H1 (cell line): ENCODE measurements at regions of chr4 and their contacts with region 1.

Region 1: DNA sequence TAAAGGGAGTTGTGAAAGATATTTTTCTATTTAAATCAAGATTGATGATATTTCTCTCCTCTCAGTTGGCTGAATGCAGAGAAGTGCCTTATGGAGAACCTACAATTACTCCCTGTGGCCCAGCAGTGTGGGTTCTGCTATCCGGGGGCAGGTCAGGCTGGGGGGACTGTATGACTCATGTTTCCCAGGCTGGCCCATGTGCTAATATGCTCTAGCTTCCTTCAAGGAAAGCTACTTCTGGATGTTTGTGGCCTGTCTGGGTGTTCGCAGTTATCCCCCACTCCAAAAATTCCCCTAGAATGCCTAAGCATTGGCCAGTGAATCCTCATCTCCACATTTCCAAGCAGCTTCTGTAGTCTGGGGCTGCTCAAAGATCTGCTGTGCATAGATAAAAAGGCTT is 58.9 kb upstream of the SPP1 start:
- DNase-seq: no peak
- H3K4me3 ChIP-seq: no peak overlapping the region
- H3K27ac ChIP-seq: no peak overlapping the region
- H3K4me1 ChIP-seq: peaks cover 18 to 43% (median 32%) of the 10 kb centered on the region in 4 experiments
- H3K27me3 ChIP-seq: no peaks in the 10 kb centered on the region
- CTCF ChIP-seq: no peak
- EP300 ChIP-seq: no peak
- POLR2A ChIP-seq: no peak
- RAD21 ChIP-seq: no peak

Region 2: GRCh38 chr4:87855559-87855958 is 61.1 kb before region 1 on chr4:
- CTCF ChIA-PET with region 1: interaction called, 6 read pairs
- POLR2A ChIA-PET with region 1: interaction called, 18 read pairs
- DNase-seq: no peak
- H3K4me3 ChIP-seq: no peak overlapping the region
- H3K27ac ChIP-seq: no peak overlapping the region
- H3K4me1 ChIP-seq: peaks cover 0 to 13% (median 5%) of the 10 kb centered on the region in 4 experiments; a peak in 5 of 7 replicates
- H3K27me3 ChIP-seq: no peaks in the 10 kb centered on the region
- CTCF ChIP-seq: no peak
- EP300 ChIP-seq: no peak
- POLR2A ChIP-seq: no peak
- RAD21 ChIP-seq: no peak

Region 3: DNA sequence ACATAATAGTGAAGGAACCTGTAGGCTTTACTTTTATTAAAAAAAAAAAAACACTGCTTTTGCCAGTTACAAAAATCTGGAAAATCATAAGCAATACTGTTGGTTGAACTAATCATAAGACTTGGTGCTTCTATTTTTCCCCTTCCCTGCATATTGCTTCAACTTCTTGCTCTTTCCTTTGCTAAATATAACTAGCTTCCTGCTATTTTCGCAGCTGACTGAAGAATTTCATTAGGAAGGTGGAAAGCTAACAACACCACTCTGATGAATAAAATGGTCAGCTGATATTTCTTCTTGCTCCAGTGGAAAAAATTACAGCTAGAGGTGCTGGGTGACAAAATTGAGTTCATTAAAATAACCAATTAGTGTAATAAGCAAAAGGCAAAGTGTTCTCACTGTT is 44.6 kb before region 1 on chr4:
- CTCF ChIA-PET with region 1: interaction called, 3 read pairs
- POLR2A ChIA-PET with region 1: interaction called, 101 read pairs
- DNase-seq: no peak
- H3K4me3 ChIP-seq: no peak overlapping the region
- H3K27ac ChIP-seq: no peak overlapping the region
- H3K4me1 ChIP-seq: peaks cover 0 to 6% (median 3%) of the 10 kb centered on the region in 4 experiments; a peak in 2 of 7 replicates
- H3K27me3 ChIP-seq: no peaks in the 10 kb centered on the region
- CTCF ChIP-seq: no peak
- EP300 ChIP-seq: no peak
- POLR2A ChIP-seq: no peak
- RAD21 ChIP-seq: no peak

Region 4: GRCh38 chr4:87901422-87901992 is 15.1 kb before region 1 on chr4:
- CTCF ChIA-PET with region 1: interaction called, 52 read pairs
- POLR2A ChIA-PET with region 1: interaction called, 19 read pairs
- DNase-seq: no peak
- H3K4me3 ChIP-seq: no peak overlapping the region
- H3K27ac ChIP-seq: no peak overlapping the region
- H3K4me1 ChIP-seq: peaks cover 0 to 3% (median 2%) of the 10 kb centered on the region in 4 experiments; a peak in 3 of 7 replicates
- H3K27me3 ChIP-seq: no peaks in the 10 kb centered on the region
- CTCF ChIP-seq: no peak
- EP300 ChIP-seq: no peak
- POLR2A ChIP-seq: no peak
- RAD21 ChIP-seq: no peak

Region 5: GRCh38 chr4:87932718-87933141 is 16.1 kb after region 1 on chr4:
- CTCF ChIA-PET with region 1: no interaction called
- POLR2A ChIA-PET with region 1: interaction called, 143 read pairs
- DNase-seq: no peak
- H3K4me3 ChIP-seq: no peak overlapping the region
- H3K27ac ChIP-seq: no peak overlapping the region
- H3K4me1 ChIP-seq: peaks cover 0 to 6% (median 0%) of the 10 kb centered on the region in 4 experiments; a peak in 2 of 7 replicates
- H3K27me3 ChIP-seq: no peaks in the 10 kb centered on the region
- CTCF ChIP-seq: no peak
- EP300 ChIP-seq: no peak
- POLR2A ChIP-seq: peak; percentile 62 to 99
- RAD21 ChIP-seq: no peak

Region 6: DNA sequence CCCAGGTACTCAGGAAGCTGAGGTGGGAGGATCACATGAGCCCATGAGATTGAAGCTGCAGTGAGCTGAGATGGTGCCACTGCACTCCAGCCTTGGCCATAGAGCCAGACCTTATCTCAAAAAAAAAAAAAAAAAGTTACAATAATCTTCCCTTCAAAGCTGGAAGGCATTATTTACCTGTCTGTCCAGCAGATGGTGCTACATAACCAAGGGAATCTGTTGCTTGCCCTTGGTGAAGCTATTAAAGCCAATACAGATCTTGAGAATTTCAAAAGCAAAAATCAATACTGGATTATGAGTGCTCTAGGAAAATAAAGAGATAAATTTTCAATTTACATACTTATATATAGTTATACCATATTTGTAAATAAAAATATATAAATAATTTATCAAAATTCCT is 116.7 kb after region 1 on chr4:
- CTCF ChIA-PET with region 1: no interaction called
- POLR2A ChIA-PET with region 1: no interaction called
- DNase-seq: no peak
- H3K4me3 ChIP-seq: no peak overlapping the region
- H3K27ac ChIP-seq: no peak overlapping the region
- H3K4me1 ChIP-seq: no peaks in the 10 kb centered on the region
- H3K27me3 ChIP-seq: no peaks in the 10 kb centered on the region
- CTCF ChIP-seq: peak in 2 of 3 experiments; percentile 55 to 61; a peak in 2 of 4 replicates
- EP300 ChIP-seq: no peak
- POLR2A ChIP-seq: no peak
- RAD21 ChIP-seq: peak; percentile 72 to 78